Dorsolateral prefrontal cortex (tissue), 120 donors: ENCODE measurements at regions of chr6 and their contacts with region 1.

Region 1: GRCh38 chr6:157323255-157323965 is at the start of gene TMEM242:
- DNase-seq: peak; percentile 83 to 94 (median 90)
- H3K4me3 ChIP-seq: peak within 1 kb of the TSS; percentile 61 to 99 (median 90)
- H3K27ac ChIP-seq: peak within 1 kb of the TSS; percentile 73 to 99 (median 93)
- H3K27me3 ChIP-seq: no peaks in the 10 kb centered on the region
- CTCF ChIP-seq: peak in 50 of 56 donors; percentile 1 to 67 (median 48)
- total RNA-seq, gene TMEM242: 10.7 to 28.5 (median 20.7) TPM

Region 2: GRCh38 chr6:157456524-157457082 is 133.2 kb after region 1 on chr6:
- intact Hi-C with region 1: loop called in 1 of 2 experiments (anchors 10 kb)
- DNase-seq: no peak
- H3K4me3 ChIP-seq: peak overlapping the region in 5 of 59 donors; percentile 21 to 34 (median 31)
- H3K27ac ChIP-seq: peak overlapping the region in 58 of 59 donors; percentile 33 to 98 (median 92)
- H3K27me3 ChIP-seq: no peaks in the 10 kb centered on the region
- CTCF ChIP-seq: no peak

Region 3: DNA sequence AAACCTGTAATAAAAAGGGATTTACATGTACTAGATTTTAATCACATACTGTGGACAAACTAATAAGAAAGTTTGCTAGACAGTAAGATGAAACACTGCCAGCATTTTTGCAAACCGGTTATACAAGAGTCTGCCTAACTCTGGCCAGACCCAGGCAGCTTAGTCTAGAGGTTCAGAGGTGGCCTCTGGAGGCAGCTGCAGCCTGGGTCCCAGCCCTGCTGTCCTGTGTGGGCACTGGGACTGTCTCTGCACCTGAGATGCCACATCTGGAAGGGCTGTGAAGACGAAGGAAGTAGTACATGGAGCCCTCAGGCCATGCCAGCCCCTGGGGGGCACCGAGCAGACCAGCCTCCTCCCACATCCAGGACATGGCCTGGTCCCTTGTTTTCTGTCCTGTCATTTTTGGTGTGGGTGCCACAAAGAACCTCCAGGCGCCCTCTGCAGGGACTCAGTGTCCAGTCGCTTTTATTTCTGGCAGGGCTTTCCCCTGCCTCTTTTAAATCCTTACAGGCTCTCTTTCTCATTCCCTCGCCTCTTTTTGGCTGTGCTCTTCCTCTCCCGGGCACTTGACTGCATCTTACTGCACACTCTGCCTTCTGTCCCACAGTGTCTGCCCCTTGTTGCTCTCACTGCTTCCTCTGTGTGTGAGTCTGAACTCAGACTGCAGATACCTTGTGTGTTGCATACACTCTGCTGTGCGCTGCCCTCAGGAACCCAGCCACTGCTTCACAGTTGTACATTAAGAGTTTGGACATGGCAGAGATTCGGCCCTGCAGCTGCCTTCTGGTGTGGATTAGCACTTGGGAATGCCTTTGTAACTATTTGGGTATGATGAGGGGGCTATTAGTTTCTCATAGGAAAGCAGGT is 274.3 kb after region 1 on chr6:
- intact Hi-C with region 1: loop called (anchors 5 kb)
- DNase-seq: peak in 4 of 10 donors; percentile 15 to 49 (median 34)
- H3K4me3 ChIP-seq: no peak overlapping the region
- H3K27ac ChIP-seq: peak overlapping the region in 13 of 59 donors; percentile 1 to 77 (median 20)
- H3K27me3 ChIP-seq: no peaks in the 10 kb centered on the region
- CTCF ChIP-seq: peak in 54 of 56 donors; percentile 22 to 72 (median 51)

Region 4: GRCh38 chr6:158835616-158836221 is 1512.3 kb after region 1 on chr6:
- intact Hi-C with region 1: no loop called
- DNase-seq: no peak
- H3K4me3 ChIP-seq: no peak overlapping the region
- H3K27ac ChIP-seq: no peak overlapping the region
- H3K27me3 ChIP-seq: peaks cover 0 to 21% (median 0%) of the 10 kb centered on the region in 45 donors
- CTCF ChIP-seq: no peak